Right ventricle myocardium inferior (tissue), 1 donor: ENCODE measurements at regions of chr11 and their contacts with region 1.

Region 1: DNA sequence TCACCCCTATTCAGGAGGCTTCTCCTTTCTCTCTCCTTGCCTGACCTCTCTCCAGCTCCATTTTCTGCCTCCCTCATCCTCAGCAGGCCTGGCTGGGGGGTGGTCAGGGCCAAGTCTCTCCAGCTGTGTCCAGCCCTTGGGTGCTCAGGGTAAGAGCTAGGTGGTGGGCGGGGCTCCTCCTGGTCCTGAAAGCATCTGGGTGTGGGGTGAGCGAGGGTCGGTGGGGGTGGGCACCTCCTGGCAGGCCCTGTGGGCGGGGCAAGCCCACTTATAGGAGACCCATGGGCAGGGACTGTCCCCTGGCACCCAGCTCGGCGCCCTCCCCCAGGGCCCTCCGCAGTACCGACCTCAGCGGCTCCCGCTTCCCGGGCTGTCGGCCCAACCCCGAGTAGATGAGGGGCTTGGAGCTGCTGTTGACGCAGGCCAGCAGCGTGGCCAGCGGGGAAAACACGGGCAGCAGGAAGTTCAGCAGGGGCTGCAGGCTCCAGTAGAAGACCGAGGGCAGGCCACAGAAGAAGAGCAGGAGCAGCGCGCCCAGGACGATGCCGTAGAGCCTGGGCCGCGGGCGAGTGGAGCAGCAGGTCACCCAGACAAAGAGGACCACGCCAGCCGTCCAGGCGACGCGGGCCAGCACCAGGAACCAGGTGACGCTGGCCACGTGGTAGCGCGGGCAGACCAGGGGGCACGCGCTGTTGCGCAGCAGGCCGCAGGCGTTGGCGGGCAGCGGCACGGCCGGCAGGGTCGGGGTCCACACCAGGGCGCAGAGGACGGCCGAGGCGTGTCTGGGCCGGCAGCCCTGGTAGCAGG is 734 bp downstream of the MRGPRG start:
- DNase-seq: no peak
- ATAC-seq: no peak

Region 2: GRCh38 chr11:2963112-2963817 is 254.6 kb before region 1 on chr11:
- intact Hi-C with region 1: no loop called
- DNase-seq: no peak
- ATAC-seq: no peak

Region 3: GRCh38 chr11:3109921-3110706 is 107.8 kb before region 1 on chr11:
- intact Hi-C with region 1: loop called (anchors 2 kb)
- DNase-seq: peak; percentile 62
- ATAC-seq: peak; percentile 74